ENCODE measurements at regions of chr11 and their contacts with region 1.

Region 1: GRCh38 chr11:102488208-102488607 is 35.6 kb upstream of the TMEM123 start:
- DNase-seq: no peak
- ATAC-seq: no peak
- H3K4me3 ChIP-seq: no peak overlapping the region
- H3K27ac ChIP-seq: no peak overlapping the region
- H3K4me1 ChIP-seq: no peaks in the 10 kb centered on the region
- H3K27me3 ChIP-seq: peaks cover 0 to 11% (median 0%) of the 10 kb centered on the region in 7 donors
- CTCF ChIP-seq: no peak

Region 2: GRCh38 chr11:102390667-102391465 is 97.3 kb before region 1 on chr11:
- intact Hi-C with region 1: loop called in 3 of 10 experiments (anchors 2 to 5 kb)
- DNase-seq: peak; percentile 44 to 57
- ATAC-seq: peak; percentile 76 to 88 (median 86)
- H3K4me3 ChIP-seq: no peak overlapping the region
- H3K27ac ChIP-seq: no peak overlapping the region
- H3K4me1 ChIP-seq: peaks cover 0 to 5% (median 0%) of the 10 kb centered on the region in 9 donors
- H3K27me3 ChIP-seq: no peaks in the 10 kb centered on the region
- CTCF ChIP-seq: peak; percentile 71 to 87 (median 83)

Region 3: DNA sequence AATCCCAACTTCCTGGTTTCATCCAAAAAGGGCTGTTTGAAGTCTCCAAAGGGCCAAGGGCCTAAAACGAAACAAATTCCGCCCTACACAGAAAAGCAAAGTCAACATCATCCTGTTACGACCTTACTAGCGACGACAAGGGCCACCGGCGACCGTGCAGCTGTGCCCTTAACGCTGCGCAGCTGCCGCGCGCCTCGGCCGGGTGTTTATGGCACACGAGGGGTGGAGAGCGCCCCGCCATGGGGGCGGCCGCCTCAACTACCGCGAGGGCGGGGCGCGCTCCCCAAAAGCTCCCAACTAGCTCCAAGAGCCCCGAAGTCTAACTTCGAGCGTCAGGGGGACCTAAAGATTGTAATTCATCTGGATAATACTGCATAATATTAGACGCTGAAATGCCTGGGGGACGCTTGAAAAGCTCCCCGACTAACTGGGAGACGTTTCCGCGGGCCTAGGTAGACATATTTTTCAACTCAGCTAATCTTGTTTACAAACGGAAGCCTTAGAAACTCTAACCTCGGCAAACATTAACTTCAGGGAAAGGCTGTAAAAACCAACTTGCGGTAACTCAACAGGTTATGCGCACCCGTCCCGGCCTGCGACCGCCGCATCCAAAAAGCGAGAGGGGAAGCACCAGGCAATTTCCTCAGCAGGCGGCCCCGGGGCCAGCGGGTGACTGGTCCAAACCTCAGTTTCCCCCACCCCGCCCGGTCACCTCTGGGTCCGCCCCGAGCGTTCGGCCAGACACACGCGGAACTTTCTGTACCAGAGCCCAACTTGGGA is 36.3 kb before region 1 on chr11:
- intact Hi-C with region 1: no loop called
- DNase-seq: peak; percentile 58 to 66
- ATAC-seq: peak; percentile 68 to 90 (median 84)
- H3K4me3 ChIP-seq: peak overlapping the region; percentile 78 to 99 (median 88)
- H3K27ac ChIP-seq: peak overlapping the region; percentile 57 to 92 (median 88)
- H3K4me1 ChIP-seq: peaks cover 0 to 62% (median 30%) of the 10 kb centered on the region in 9 donors
- H3K27me3 ChIP-seq: no peaks in the 10 kb centered on the region
- CTCF ChIP-seq: peak in 3 of 9 donors; percentile 29 to 38 (median 37)

Region 4: GRCh38 chr11:102560555-102561011 is 72.4 kb after region 1 on chr11:
- intact Hi-C with region 1: no loop called
- DNase-seq: no peak
- ATAC-seq: peak in 1 of 8 donors; percentile 59
- H3K4me3 ChIP-seq: peak overlapping the region in 7 of 10 donors; percentile 9 to 38 (median 27)
- H3K27ac ChIP-seq: no peak overlapping the region
- H3K4me1 ChIP-seq: peaks cover 0 to 23% (median 0%) of the 10 kb centered on the region in 9 donors
- H3K27me3 ChIP-seq: no peaks in the 10 kb centered on the region
- CTCF ChIP-seq: no peak

Measured in heart right ventricle (tissue), 16 donors.